Dendritic cell treated with granulocyte-macrophage colony-stimulating factor and Interleukin-4, amounts not matched to agents 40 ng/mL and 50 ng/mL, for 4 days (primary cell): ENCODE measurements at regions of chr19 and their contacts with region 1.

Region 1: GRCh38 chr19:771332-771785 is 20.4 kb downstream of the MISP start:
- H3K4me3 Mint-ChIP-seq: no peak overlapping the region
- H3K27ac Mint-ChIP-seq: peak overlapping the region; percentile 20
- H3K4me1 Mint-ChIP-seq: peaks cover 5% of the 10 kb centered on the region
- H3K27me3 Mint-ChIP-seq: peaks cover 18% of the 10 kb centered on the region

Region 2: GRCh38 chr19:920051-920864 is 148.9 kb after region 1 on chr19:
- intact Hi-C with region 1: loop called (anchors 2 kb)
- H3K4me3 Mint-ChIP-seq: peak overlapping the region; percentile 51
- H3K27ac Mint-ChIP-seq: no peak overlapping the region
- H3K4me1 Mint-ChIP-seq: peaks cover 44% of the 10 kb centered on the region
- H3K27me3 Mint-ChIP-seq: peaks cover 57% of the 10 kb centered on the region